ENCODE measurements at regions of chr1 and their contacts with region 1.

Region 1: DNA sequence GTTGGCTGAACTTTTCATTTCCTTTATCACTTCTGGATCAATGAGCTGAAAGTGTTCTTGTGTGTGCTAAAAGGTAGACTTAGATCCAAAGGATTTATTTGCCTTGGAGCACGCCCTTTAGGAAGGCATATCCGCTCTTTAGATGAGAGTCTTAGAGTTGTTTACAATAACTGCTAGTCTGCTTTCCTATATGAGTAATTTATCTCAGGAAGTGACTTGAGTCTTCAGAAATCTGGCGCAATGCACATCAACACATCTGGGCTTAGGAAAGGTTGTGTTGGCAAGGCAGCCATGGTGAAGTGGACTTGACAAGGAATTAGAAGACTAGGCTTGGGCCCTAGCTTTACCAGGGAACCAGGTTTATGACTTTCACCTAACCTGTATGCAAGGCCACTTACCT is 204.1 kb upstream of the PTGFR start:
- DNase-seq: no peak
- H3K4me3 ChIP-seq: no peak overlapping the region
- H3K27ac ChIP-seq: no peak overlapping the region
- H3K4me1 ChIP-seq: no peaks in the 10 kb centered on the region
- H3K27me3 ChIP-seq: no peaks in the 10 kb centered on the region
- CTCF ChIP-seq: no peak
- POLR2A ChIP-seq: no peak

Region 2: GRCh38 chr1:78297836-78298235 is 11.2 kb after region 1 on chr1:
- intact Hi-C with region 1: no loop called
- DNase-seq: no peak
- H3K4me3 ChIP-seq: no peak overlapping the region
- H3K27ac ChIP-seq: no peak overlapping the region
- H3K4me1 ChIP-seq: no peaks in the 10 kb centered on the region
- H3K27me3 ChIP-seq: no peaks in the 10 kb centered on the region
- CTCF ChIP-seq: no peak
- POLR2A ChIP-seq: no peak

Region 3: GRCh38 chr1:80099713-80100112 is 1813.0 kb after region 1 on chr1:
- intact Hi-C with region 1: loop called (anchors 10 kb)
- DNase-seq: no peak
- H3K4me3 ChIP-seq: no peak overlapping the region
- H3K27ac ChIP-seq: no peak overlapping the region
- H3K4me1 ChIP-seq: no peaks in the 10 kb centered on the region
- H3K27me3 ChIP-seq: no peaks in the 10 kb centered on the region
- CTCF ChIP-seq: no peak
- POLR2A ChIP-seq: no peak